Posterior cingulate gyrus (tissue), 11 donors: ENCODE measurements at regions of chr6 and their contacts with region 1.

Region 1: DNA sequence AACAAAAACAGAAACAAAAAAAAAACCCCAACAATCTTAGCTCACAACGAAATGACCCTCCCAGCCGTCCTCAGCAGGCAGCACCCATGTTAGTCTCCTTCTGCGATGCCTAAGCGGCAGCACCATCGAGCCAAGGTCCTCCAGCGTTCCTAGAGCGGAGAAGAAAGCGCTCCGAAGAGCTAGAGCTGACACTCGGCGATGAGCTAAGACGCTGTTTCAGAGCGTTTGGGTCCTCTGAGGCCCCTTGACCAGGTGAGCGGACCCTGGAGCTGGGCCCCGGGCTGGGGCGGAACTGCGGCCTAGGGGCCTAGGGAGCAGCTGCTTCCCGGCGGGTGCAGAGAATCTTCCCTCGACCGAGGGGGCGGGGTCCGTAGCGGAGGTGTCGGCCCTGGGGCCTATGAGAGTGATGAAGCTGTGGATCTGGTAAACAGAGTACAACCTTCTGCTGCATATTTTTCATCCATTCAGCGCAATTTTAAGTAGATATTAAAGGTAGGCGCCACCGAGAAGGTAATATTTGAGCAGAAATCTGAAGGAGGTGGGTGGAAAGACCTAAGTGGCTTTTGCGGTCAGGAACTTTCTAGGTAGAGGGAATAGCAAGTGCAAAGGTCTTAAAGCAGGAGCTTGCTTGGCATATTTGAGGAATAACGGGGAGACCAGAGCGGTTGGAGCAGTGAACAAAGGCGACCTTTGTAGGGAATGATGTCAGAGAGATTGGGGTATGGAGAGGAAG is at the start of gene ZSCAN26:
- DNase-seq: peak; percentile 74 to 97 (median 82)

Region 2: GRCh38 chr6:27972750-27973149 is 294.4 kb before region 1 on chr6:
- intact Hi-C with region 1: no loop called
- DNase-seq: no peak

Region 3: GRCh38 chr6:27986928-27987725 is 280.0 kb before region 1 on chr6:
- intact Hi-C with region 1: no loop called
- DNase-seq: no peak

Region 4: GRCh38 chr6:28080631-28081485 is 186.3 kb before region 1 on chr6:
- intact Hi-C with region 1: loop called (anchors 10 kb)
- DNase-seq: peak; percentile 87 to 98 (median 92)

Region 5: GRCh38 chr6:28335564-28336283 is 68.6 kb after region 1 on chr6 and contains the start of gene ZSCAN31:
- intact Hi-C with region 1: loop called (anchors 5 kb)
- DNase-seq: peak; percentile 75 to 98 (median 88)

Region 6: GRCh38 chr6:29035951-29036350 is 768.8 kb after region 1 on chr6:
- intact Hi-C with region 1: no loop called
- DNase-seq: peak in 3 of 10 donors; percentile 59 to 67 (median 60)